ENCODE measurements at regions of chr10 and their contacts with region 1.

Region 1: GRCh38 chr10:113052076-113052830 is 102.2 kb downstream of the TCF7L2 start:
- DNase-seq: no peak
- ATAC-seq: no peak
- H3K4me3 ChIP-seq: no peak overlapping the region
- H3K4me3 Mint-ChIP-seq: no peak overlapping the region
- H3K27ac ChIP-seq: no peak overlapping the region
- H3K27ac Mint-ChIP-seq: no peak overlapping the region
- H3K4me1 ChIP-seq: peaks cover 15 to 28% of the 10 kb centered on the region in 2 experiments
- H3K4me1 Mint-ChIP-seq: peaks cover 24 to 33% (median 26%) of the 10 kb centered on the region in 3 donors
- H3K27me3 ChIP-seq: no peaks in the 10 kb centered on the region
- H3K27me3 Mint-ChIP-seq: peaks cover 0 to 10% of the 10 kb centered on the region in 2 donors

Region 2: DNA sequence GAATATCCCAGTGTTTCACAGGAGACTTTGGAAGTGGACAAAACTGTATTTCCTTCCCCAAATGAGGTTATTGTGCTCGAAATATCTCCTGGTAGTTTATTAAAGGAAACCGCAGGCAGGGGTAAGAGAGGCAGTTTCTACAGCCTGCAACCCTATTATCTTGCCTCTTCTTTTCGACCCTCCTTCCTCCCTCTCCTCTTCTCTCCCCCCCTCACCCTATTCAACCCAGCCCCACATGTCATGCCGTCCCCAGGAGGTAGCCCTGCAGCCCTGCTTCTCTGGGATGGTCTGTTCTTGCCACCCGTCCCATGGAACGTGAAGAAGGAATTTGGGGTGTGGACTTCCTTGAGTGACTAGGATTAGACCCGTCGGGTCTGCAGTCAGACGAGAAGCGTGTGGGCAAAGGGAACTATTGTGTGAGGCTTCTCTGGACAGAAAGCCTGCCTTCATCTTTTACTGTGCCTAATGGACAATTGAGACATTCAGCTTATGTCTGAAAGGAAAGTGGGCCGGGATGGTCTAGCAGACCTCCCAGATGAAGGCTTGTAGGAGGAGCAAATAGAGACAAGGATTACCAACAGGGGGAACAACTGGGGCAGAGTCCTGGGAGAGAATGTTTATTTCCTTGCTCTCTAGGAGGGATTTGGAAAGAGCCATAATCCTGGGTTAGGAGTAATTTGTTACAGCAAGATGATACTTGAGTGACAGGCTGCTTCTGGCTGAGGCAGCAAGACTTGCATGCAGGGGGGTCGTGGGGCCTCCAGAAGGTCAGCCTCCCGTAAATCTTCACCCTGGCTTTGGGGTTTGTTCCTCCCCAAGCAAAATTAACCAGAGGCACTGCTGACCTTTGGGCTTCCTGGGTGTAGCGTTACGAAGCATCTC is 24.4 kb before region 1 on chr10:
- CTCF ChIA-PET with region 1: no interaction called
- POLR2A ChIA-PET with region 1: no interaction called
- DNase-seq: no peak
- ATAC-seq: no peak
- H3K4me3 ChIP-seq: no peak overlapping the region
- H3K4me3 Mint-ChIP-seq: no peak overlapping the region
- H3K27ac ChIP-seq: no peak overlapping the region
- H3K27ac Mint-ChIP-seq: no peak overlapping the region
- H3K4me1 ChIP-seq: peaks cover 0 to 7% of the 10 kb centered on the region in 2 experiments
- H3K4me1 Mint-ChIP-seq: peaks cover 0 to 12% (median 2%) of the 10 kb centered on the region in 3 donors
- H3K27me3 ChIP-seq: peaks cover 0 to 4% of the 10 kb centered on the region in 2 experiments
- H3K27me3 Mint-ChIP-seq: peaks cover 6 to 14% of the 10 kb centered on the region in 2 donors

Region 3: DNA sequence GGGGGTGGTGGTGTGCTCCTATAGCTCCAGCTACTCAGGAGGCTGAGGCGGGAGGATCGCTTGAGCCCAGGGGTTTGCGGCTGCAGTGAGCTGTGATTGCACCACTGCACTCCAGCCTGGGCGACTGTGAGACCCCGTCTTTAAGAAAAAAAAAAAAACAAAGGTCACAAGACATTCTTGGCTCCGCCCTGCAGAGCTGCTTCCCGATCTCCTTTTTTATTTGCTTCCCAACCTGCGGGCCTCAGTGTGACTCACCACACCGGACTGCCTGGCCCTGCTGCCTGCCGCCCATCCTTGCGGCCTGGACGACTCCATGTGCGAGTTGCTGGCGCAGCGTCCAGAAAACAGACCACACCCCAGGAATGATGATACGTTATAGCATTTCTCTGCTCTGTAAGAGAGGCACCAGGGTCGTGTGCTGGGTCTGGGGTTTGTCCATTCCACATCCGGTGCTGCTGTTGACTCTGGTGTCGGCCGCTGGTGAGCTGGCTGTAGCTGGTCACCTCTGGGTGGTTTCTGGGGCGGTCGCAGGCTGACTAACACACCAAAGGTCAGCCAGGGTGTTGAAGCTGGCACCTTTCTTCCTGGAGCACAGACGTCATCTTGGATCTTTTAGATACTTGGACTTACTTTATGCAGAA is 21.4 kb after region 1 on chr10:
- CTCF ChIA-PET with region 1: no interaction called
- POLR2A ChIA-PET with region 1: interaction called in 1 of 2 experiments, 16 read pairs
- DNase-seq: no peak
- ATAC-seq: no peak
- H3K4me3 ChIP-seq: no peak overlapping the region
- H3K4me3 Mint-ChIP-seq: no peak overlapping the region
- H3K27ac ChIP-seq: no peak overlapping the region
- H3K27ac Mint-ChIP-seq: no peak overlapping the region
- H3K4me1 ChIP-seq: no peaks in the 10 kb centered on the region
- H3K4me1 Mint-ChIP-seq: no peaks in the 10 kb centered on the region
- H3K27me3 ChIP-seq: no peaks in the 10 kb centered on the region
- H3K27me3 Mint-ChIP-seq: no peaks in the 10 kb centered on the region